GM18951 (cell line): ENCODE measurements at regions of chr5 and their contacts with region 1.

Region 1: GRCh38 chr5:157718519-157718918 is 12.7 kb upstream of the THG1L start:
- POLR2A ChIP-seq: no peak

Region 2: DNA sequence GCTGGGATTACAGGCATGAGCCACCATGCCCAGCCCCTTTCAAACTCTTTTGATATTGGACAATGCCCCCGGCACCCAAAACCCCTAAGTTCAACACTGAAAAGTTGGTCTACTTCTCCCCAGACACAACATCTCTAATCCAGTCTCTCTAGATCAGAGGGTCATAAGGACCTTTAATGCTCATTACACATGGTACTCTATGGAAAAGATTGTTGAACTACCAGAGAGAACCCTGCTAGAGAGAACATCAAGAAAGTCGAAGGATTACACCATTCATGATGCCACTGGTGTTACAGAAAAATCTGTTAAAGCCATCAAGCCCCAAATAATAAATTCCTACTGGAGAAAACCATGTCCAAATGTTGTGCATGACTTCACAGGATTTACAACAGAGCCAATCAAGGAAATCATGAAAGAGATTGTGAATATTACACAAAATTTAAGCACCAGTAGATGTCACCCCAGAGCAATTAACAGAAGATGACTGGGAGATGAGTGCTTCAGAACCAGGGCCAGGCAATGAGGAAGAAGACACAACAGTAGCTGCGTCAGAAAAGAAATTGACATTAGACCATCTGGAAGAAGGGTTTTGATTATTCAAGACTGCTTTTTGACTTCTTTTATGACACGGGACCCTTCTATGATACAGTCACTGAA is 286.8 kb before region 1 on chr5:
- in situ Hi-C with region 1: loop called (anchors 25 kb)
- POLR2A ChIP-seq: no peak